Activated CD4-positive, alpha-beta T cell treated with anti-CD3 and anti-CD28 coated beads, Interleukin-2, amount 10 ng/mL, durations not matched to agents 24 days and 14 days (primary cell): ENCODE measurements at regions of chr12 and their contacts with region 1.

Region 1: GRCh38 chr12:91109148-91109564 is 2.1 kb downstream of the LUM start:
- DNase-seq: peak; percentile 84
- H3K4me3 Mint-ChIP-seq: no peak overlapping the region
- H3K27ac Mint-ChIP-seq: no peak overlapping the region
- H3K4me1 Mint-ChIP-seq: no peaks in the 10 kb centered on the region
- H3K27me3 Mint-ChIP-seq: no peaks in the 10 kb centered on the region

Region 2: DNA sequence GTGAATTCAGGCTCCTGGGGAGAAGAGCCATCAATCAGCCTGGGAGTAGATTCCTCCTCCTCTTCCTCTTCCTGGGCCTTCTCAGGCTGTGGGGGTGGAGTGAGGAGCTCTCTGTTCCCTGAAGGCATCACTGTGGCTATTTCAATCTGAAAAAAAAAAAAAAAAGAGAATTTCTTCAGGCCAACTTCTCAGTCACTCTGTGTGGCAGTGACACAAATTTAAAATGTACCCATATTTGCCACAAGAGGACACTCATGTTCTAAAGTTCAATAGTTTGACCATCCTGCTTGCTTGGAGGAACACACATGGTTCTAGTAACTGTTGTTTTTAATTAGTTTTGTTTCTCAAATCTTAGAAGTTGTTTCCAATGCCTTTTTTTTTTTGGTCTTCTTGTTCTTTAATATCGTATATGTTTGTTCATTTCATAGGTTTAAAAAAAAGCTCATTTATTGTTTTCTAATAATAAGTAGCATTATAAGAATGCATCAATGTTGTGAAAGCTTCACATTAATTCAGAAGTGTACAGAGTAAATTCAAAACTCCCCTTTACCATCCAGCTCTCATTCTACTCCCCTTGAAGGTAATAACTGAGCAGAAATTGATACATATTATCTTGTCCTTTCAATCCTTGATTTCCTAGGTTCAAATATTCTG is 130.9 kb before region 1 on chr12:
- intact Hi-C with region 1: loop called (anchors 1 kb)
- DNase-seq: no peak
- H3K4me3 Mint-ChIP-seq: no peak overlapping the region
- H3K27ac Mint-ChIP-seq: no peak overlapping the region
- H3K4me1 Mint-ChIP-seq: no peaks in the 10 kb centered on the region
- H3K27me3 Mint-ChIP-seq: peaks cover 8% of the 10 kb centered on the region